Body of pancreas (tissue), 4 donors: ENCODE measurements at regions of chr3 and their contacts with region 1.

Region 1: GRCh38 chr3:135213822-135214221 is 418.8 kb downstream of the EPHB1 start:
- DNase-seq: no peak
- ATAC-seq: no peak
- H3K4me3 ChIP-seq: no peak overlapping the region
- H3K27ac ChIP-seq: no peak overlapping the region
- H3K4me1 ChIP-seq: no peaks in the 10 kb centered on the region
- H3K27me3 ChIP-seq: no peaks in the 10 kb centered on the region
- CTCF ChIP-seq: no peak
- POLR2A ChIP-seq: no peak

Region 2: DNA sequence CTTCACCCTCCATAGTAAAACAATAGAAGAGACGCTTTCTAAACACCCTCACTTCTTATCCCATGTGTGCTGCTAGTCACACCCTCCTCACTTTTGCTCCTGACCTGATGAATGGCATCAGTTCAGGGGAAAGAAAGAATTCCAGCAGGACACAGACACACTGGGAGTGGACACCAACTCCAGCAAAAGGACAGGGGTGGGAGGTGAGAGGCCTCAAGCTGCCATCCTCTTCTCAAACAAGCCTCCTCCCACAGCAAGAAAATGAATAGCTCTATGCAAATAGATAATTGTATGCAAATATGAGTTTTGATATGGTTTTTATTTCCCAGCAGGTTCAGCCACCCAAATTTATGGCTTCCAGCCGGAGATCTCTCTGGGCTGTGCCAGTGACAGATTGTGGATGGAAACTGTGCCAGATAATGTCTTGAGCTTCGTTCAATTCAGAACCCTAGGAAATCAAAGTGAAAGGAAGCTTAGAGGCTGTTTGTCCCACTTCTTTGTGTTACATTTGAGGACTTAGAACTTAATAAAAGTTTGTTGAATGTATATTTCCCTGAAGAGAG is 542.4 kb after region 1 on chr3:
- intact Hi-C with region 1: loop called (anchors 5 kb)
- DNase-seq: no peak
- ATAC-seq: no peak
- H3K4me3 ChIP-seq: no peak overlapping the region
- H3K27ac ChIP-seq: no peak overlapping the region
- H3K4me1 ChIP-seq: no peaks in the 10 kb centered on the region
- H3K27me3 ChIP-seq: no peaks in the 10 kb centered on the region
- CTCF ChIP-seq: no peak
- POLR2A ChIP-seq: no peak